Esophagus squamous epithelium (tissue), 5 donors: ENCODE measurements at regions of chr11 and their contacts with region 1.

Region 1: DNA sequence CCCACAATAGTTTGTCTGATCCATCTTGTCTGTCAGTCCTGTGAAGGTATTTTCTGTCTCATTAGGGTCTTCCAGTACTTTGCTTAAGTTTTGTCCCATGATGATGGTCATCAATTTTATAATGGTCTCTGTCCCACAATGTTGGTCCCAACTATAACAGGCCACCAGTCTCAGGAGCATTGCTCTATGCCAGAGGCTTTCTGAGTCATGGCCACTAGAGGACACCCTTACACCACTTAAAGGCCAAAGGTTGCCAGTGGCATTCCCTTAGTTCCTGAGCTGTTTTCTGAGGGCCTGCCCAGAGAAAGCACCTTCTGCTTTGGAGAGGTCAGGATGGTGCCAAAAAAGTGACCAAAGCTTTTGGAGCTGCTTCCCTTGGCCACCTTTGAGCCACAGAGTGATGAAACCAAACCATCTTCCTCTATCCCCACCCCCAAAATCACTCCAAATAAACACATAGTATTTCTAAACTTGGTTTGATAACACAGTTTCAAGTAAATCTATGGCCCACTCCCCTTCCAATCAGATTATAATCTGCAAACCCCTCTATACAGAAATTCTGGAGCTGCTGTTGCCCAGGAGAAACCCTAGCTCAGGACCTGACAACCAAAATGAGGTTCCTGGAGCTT is 19.3 kb downstream of the EIF3F start:
- DNase-seq: no peak
- H3K4me3 ChIP-seq: no peak overlapping the region
- H3K27ac ChIP-seq: no peak overlapping the region
- H3K4me1 ChIP-seq: no peaks in the 10 kb centered on the region
- H3K27me3 ChIP-seq: no peaks in the 10 kb centered on the region
- CTCF ChIP-seq: peak; percentile 22 to 78 (median 72)
- POLR2A ChIP-seq: no peak

Region 2: DNA sequence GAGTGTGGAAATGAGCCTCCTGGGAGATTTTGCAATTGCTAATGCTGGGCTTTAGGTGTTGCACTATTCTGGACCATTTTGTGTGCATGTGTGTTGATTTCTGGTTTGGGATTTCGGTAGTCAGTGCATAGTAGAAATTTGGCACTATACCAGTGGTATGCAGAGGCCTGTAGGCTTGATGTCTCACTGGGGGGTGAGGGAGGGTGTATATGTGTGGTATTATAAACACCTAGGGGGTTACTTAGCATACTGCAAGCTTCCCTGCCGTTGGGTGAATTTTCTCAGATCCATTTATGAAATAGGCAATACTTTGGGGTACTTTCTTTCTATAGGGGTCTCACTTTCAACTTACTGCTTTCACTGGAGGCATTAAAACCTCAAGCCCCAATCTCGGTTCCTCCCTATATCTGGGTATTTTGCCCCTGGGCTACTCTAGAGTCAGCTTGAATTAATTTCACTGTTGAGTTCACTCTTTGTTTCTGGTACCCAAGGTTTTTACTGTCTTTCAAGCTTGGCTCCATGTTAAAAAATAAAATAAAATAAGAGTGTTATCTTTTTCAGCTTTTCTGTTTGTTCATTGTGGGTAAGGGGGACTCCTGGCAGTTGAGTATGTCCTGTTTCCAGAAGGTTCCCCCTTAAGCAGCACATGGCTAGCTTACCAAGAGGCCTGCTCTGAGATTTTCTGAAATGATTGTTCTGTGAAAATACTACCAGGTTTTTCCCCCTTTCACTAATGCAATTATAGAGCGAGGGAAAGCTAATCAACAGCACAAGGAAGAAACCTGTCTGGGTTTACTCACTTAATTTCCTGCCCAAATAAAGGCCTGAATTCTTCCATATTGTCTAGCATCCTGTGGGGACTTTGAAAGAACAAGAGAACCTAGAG is 446.8 kb before region 1 on chr11:
- intact Hi-C with region 1: no loop called
- DNase-seq: no peak
- H3K4me3 ChIP-seq: no peak overlapping the region
- H3K27ac ChIP-seq: no peak overlapping the region
- H3K4me1 ChIP-seq: peaks cover 0 to 7% (median 0%) of the 10 kb centered on the region in 3 donors
- H3K27me3 ChIP-seq: no peaks in the 10 kb centered on the region
- CTCF ChIP-seq: no peak
- POLR2A ChIP-seq: no peak

Region 3: DNA sequence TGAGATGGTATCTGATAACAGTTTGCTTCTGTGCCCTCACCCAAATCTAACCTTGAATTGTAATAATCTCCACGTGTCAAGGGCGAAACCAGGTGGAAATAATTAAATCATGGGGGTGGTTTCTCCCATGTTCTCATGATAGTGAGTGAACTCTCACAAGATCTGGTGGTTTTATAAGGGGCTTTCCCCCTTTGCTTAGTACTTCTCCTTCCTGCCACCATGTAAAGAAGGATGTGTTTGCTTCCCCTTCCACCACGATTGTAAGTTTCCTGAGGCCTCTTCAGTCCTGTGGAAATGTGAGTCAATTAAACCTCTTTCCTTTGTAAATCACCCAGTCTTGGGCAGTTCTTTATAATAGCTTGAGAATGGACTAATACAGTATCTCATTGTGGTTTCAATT is 291.7 kb before region 1 on chr11:
- intact Hi-C with region 1: no loop called
- DNase-seq: no peak
- H3K4me3 ChIP-seq: no peak overlapping the region
- H3K27ac ChIP-seq: no peak overlapping the region
- H3K4me1 ChIP-seq: no peaks in the 10 kb centered on the region
- H3K27me3 ChIP-seq: no peaks in the 10 kb centered on the region
- CTCF ChIP-seq: no peak
- POLR2A ChIP-seq: no peak

Region 4: GRCh38 chr11:8092587-8093424 is 86.3 kb after region 1 on chr11:
- intact Hi-C with region 1: loop called (anchors 5 kb)
- DNase-seq: no peak
- H3K4me3 ChIP-seq: no peak overlapping the region
- H3K27ac ChIP-seq: no peak overlapping the region
- H3K4me1 ChIP-seq: peaks cover 0 to 28% (median 0%) of the 10 kb centered on the region in 3 donors
- H3K27me3 ChIP-seq: no peaks in the 10 kb centered on the region
- CTCF ChIP-seq: peak; percentile 21 to 68 (median 52)
- POLR2A ChIP-seq: no peak

Region 5: DNA sequence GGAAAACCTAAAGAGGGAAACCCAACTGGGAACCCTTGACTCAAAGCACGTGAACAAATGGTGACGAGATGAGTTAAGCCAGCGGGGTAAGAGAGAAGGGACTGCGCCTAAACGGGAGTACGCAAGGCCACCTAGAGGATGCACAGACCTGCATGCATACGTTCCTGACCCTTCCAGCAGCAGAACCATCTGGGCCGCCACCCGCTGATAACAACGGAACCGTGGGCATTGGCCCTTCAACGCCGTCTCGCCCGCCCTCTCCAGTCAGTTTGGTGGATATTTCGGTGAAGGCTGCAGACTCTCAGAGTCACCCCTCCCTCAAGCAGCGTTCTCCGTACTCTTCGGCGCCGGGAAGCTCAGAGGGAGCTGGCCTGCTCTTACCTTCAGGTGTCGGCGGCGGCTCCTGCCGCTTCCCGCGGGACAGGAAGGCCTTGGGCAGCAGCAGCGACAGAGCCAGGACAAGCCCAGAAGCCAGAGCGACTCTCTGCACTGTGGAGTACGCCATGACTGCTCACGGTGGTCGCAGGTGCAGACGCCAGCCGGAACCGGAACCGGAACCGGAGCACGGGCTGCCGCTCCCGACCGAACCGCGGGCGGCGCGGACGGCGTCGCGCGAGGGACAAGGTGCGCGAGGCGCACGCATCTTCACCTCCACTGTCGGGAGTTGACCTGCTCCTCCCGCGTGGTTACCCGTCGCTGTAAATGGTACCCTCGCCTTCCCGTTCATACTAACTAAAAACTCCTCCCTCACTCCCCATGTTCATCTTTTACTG is 162.2 kb after region 1 on chr11 and contains the start of gene RIC3:
- intact Hi-C with region 1: no loop called
- DNase-seq: no peak
- H3K4me3 ChIP-seq: peak within 1 kb of the TSS; percentile 45 to 85 (median 64)
- H3K27ac ChIP-seq: peak within 1 kb of the TSS in 2 of 4 donors; percentile 22 to 37
- H3K4me1 ChIP-seq: peaks cover 5 to 19% (median 17%) of the 10 kb centered on the region in 3 donors
- H3K27me3 ChIP-seq: peaks cover 0 to 44% (median 0%) of the 10 kb centered on the region in 4 donors
- CTCF ChIP-seq: peak in 1 of 6 experiments; percentile 10
- POLR2A ChIP-seq: no peak
- total RNA-seq, gene RIC3: 2.7 to 14.1 (median 8.1) TPM